Tibial artery (tissue), 4 donors: ENCODE measurements at regions of chr5 and their contacts with region 1.

Region 1: DNA sequence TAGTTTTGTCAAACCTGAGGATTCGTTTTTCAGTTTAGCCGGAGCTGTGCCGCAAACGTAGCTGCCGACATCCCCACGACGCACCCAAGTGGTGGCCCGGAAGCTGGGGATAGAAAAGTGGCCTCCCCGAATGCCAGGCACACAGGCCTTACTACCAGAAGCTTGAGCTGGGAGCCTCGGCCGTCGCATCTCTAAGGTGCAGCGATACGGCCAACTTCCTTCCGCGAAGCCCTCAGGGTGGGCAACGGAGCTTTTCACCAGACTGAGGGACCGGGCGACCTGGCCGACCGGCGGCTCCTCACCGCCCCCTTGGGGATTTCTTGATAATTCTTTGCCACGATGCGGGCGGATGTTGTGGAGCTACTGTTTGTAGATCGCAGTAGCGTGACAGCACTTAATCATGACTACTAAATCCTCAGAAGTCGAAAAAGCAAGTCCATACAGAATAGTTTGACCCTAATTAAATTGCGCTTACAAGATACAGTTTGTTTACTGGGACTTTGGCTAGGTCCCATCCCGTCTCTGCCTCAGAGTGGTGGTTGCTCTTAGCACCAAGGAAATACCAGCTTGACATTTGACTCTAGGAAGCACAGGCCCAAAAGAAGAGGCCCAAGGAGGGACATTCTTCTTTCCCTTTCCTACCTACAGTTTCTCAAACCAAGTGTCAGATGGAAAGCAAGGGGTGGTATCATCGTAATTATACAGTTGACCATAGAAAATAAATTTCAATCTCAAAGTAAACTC is 613 bp upstream of the TMEM267 start:
- DNase-seq: peak; percentile 75 to 88
- H3K4me3 ChIP-seq: peak overlapping the region; percentile 65 to 83
- H3K27ac ChIP-seq: peak overlapping the region; percentile 91 to 95
- H3K4me1 ChIP-seq: peaks cover 0 to 18% (median 14%) of the 10 kb centered on the region in 4 donors
- H3K27me3 ChIP-seq: no peaks in the 10 kb centered on the region
- CTCF ChIP-seq: peak; percentile 55 to 71

Region 2: DNA sequence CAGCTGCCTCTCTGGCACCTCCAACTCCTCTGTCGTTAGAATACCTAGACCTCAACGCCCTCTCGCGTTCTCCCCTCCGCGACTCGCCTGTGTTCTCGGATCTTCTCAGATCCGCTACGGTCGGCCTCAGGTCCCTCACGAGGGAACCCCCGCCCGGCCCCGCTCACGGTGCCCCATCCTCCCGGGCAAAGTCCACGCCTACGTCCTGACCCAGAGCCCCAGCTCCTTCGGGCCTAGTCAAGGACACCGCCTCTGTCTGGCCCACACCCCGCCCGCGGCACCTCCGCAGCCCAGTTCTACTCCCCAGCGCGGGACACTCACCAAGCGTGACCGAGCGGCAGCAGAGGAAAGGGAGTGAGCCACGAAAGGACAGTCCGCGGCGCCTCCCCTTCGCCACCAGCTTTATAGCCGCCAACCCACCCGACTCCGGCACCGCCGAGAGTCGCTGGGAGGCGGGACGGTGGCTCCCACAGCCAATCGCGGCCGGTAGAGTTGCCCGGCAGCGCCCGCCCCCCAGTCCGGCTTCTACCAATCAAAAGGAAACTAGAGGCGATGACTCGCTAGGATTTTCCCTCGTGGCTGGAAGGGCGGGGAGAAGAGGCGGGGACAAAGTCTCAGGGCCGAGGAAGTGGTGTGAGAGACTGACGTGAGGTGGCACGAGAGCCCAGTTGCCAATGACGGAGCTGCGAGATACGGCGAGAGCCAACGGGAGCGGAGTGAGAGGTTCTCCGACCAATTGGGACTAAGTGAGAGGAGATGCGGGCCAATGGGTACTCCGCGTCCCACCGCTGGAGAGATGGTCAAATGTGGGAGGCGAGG is 171.0 kb before region 1 on chr5 and contains the start of gene HMGCS1:
- intact Hi-C with region 1: loop called (anchors 5 kb)
- DNase-seq: peak; percentile 99 to 100
- H3K4me3 ChIP-seq: peak within 1 kb of the TSS; percentile 65 to 72
- H3K27ac ChIP-seq: peak within 1 kb of the TSS; percentile 87 to 89
- H3K4me1 ChIP-seq: peaks cover 0 to 37% (median 19%) of the 10 kb centered on the region in 4 donors
- H3K27me3 ChIP-seq: no peaks in the 10 kb centered on the region
- CTCF ChIP-seq: peak in 1 of 2 experiments; percentile 20